ENCODE measurements at regions of chr17 and their contacts with region 1.

Region 1: GRCh38 chr17:50793007-50793406 is 25.7 kb upstream of the ANKRD40CL start:
- DNase-seq: no peak
- H3K4me3 ChIP-seq: no peak overlapping the region
- H3K27ac ChIP-seq: no peak overlapping the region
- H3K4me1 ChIP-seq: peaks cover 0 to 5% of the 10 kb centered on the region in 2 donors
- H3K27me3 ChIP-seq: no peaks in the 10 kb centered on the region
- CTCF ChIP-seq: no peak
- POLR2A ChIP-seq: no peak

Region 2: DNA sequence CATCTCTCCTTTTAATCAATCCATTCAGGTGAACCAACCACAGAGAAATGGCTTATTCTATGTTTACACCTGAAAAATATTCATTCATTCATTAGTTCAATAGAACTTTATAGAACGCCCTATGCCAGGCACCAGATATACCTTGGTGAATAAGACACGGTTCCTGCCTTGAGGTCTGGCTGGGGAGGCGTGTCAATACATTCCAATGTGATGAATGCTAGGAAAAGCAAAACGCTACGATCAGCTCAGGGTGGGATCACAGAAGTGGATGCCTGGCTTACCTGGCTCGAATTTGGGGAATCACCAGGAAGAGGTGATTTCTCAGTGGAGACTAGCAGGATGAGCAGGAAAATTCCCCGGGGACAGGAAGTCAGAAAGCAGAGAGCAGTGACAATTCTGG is 24.8 kb after region 1 on chr17:
- intact Hi-C with region 1: loop called (anchors 2 kb)
- DNase-seq: no peak
- H3K4me3 ChIP-seq: no peak overlapping the region
- H3K27ac ChIP-seq: no peak overlapping the region
- H3K4me1 ChIP-seq: peaks cover 0 to 4% of the 10 kb centered on the region in 2 donors
- H3K27me3 ChIP-seq: no peaks in the 10 kb centered on the region
- CTCF ChIP-seq: no peak
- POLR2A ChIP-seq: no peak

Measured in thyroid gland (tissue), 4 donors.